ENCODE measurements at regions of chr16 and their contacts with region 1.

Region 1: DNA sequence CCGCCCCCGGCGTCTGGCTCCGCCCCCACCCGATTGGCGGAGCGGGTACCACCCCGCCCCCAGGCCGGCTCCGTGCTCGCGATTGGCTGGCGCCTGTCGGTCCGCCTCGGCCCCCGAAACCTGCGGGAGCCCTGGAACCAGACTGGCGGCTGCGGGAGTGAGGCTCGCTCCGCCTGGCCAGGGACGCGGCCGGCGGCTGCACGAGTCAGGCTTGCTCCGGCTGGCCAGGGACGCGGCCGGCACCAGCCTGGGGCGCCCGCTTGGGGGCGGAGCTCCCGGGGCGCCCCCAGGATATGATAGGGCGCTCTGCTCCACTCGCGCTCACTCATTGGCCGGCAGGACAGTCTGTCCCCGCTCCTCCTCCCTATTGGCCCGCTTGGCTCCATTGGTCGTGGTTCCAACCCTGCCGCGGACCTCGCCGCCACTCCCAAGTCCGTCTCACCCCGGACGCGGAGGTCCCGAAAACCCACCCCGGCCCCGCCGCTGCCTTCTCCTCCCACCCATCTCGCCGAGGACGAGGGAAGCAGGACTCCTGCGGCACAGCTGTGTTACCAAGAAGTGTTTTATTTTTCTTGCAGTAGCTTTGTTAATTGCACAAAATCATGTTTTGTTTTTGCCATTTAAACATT is 340 bp upstream of the ROGDI start:
- DNase-seq: peak; percentile 72
- ATAC-seq: peak; percentile 91
- H3K4me3 ChIP-seq: peak overlapping the region; percentile 60 to 62
- H3K27ac ChIP-seq: peak overlapping the region; percentile 89
- H3K4me1 ChIP-seq: peaks cover 13 to 20% of the 10 kb centered on the region in 2 experiments
- H3K27me3 ChIP-seq: no peaks in the 10 kb centered on the region
- CTCF ChIP-seq: no peak
- POLR2A ChIP-seq: peak; percentile 17
- RAD21 ChIP-seq: no peak

Region 2: DNA sequence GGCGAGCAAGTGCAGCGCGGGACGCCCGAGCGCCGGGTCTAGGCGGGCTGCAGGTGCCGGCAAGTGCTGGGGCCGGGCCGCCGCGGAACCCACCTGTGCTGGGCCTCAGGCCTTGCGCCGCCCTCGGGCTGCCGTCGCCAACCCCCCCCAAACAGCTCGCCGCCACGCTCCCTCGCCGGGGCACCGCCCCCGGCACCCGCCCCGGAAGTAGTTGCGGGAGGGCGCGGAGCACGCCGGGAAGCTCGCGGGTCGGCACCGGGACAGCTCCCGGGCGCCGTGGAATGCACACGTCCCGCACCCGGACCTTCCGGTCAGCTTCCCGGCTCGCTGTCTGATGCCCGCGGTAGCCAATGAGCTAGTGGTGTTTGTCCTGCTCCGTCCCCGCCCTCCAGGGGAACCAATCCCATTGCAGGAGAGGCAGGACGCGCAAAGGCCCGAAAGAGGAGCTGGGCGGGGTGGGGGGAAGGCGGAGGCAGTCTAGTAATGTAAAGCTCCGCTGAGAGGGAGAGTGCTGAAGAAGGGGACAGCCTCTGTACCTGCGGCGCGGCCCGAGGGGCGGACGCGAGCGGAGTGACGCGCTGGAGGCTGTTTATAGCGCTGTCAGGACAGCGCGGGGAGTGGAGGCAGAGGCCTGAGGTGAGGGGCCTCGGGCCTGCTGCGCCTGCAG is 68.6 kb before region 1 on chr16 and contains the starts of genes ANKS3 and DNAAF8:
- CTCF ChIA-PET with region 1: no interaction called
- POLR2A ChIA-PET with region 1: interaction called, 5 read pairs
- RAD21 ChIA-PET with region 1: no interaction called
- intact Hi-C with region 1: loop called (anchors 1 kb)
- DNase-seq: peak; percentile 92
- ATAC-seq: peak; percentile 94
- H3K4me3 ChIP-seq: peak within 1 kb of the TSS; percentile 97
- H3K27ac ChIP-seq: peak within 1 kb of the TSS; percentile 83
- H3K4me1 ChIP-seq: peaks cover 8 to 19% of the 10 kb centered on the region in 2 experiments
- H3K27me3 ChIP-seq: no peaks in the 10 kb centered on the region
- CTCF ChIP-seq: no peak
- POLR2A ChIP-seq: peak; percentile 57
- RAD21 ChIP-seq: no peak
- total RNA-seq, gene ANKS3: 25.5 TPM
- total RNA-seq, gene DNAAF8: 1.0 TPM